GM23248 (cell line): ENCODE measurements at regions of chr3 and their contacts with region 1.

Region 1: GRCh38 chr3:180594631-180595558 is 7.1 kb upstream of the TTC14 start:
- DNase-seq: peak; percentile 59
- H3K4me3 ChIP-seq: no peak overlapping the region
- H3K27ac ChIP-seq: no peak overlapping the region
- H3K4me1 ChIP-seq: no peaks in the 10 kb centered on the region
- H3K27me3 ChIP-seq: no peaks in the 10 kb centered on the region

Region 2: GRCh38 chr3:179929091-179929529 is 665.8 kb before region 1 on chr3:
- in situ Hi-C with region 1: loop called (anchors 10 kb)
- DNase-seq: peak; percentile 67
- H3K4me3 ChIP-seq: no peak overlapping the region
- H3K27ac ChIP-seq: no peak overlapping the region
- H3K4me1 ChIP-seq: no peaks in the 10 kb centered on the region
- H3K27me3 ChIP-seq: no peaks in the 10 kb centered on the region

Region 3: GRCh38 chr3:180720012-180720411 is 125.1 kb after region 1 on chr3:
- in situ Hi-C with region 1: no loop called
- DNase-seq: no peak
- H3K4me3 ChIP-seq: no peak overlapping the region
- H3K27ac ChIP-seq: no peak overlapping the region
- H3K4me1 ChIP-seq: no peaks in the 10 kb centered on the region
- H3K27me3 ChIP-seq: no peaks in the 10 kb centered on the region

Region 4: DNA sequence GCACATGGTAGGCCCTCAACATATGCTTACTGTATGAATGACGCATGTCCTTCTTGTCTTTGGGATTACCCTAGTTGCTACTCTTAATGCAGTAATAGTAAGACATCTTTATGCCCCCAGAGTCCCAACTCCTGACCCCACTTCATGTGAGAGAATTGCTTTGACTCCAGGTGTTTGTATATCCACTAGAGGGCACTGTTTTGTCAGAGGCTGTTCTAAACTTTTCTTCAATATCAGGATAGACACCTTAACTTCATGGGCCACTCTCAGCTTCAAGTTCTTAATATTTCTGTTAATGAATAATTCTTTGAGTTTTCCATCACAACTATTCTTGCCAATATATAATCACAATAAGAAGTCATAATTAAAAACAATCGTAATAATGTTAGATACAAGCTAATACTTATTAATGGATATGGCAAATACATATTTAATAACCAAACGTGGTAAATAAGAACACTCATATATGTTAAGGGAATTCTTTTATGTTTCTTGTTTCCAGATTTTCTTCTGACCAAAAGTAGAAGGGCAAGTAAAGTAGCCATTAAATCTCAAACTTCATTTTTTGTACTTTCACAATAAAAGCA is 731.8 kb after region 1 on chr3:
- in situ Hi-C with region 1: no loop called
- DNase-seq: peak; percentile 44
- H3K4me3 ChIP-seq: no peak overlapping the region
- H3K27ac ChIP-seq: no peak overlapping the region
- H3K4me1 ChIP-seq: no peaks in the 10 kb centered on the region
- H3K27me3 ChIP-seq: no peaks in the 10 kb centered on the region